CD8-positive, alpha-beta memory T cell (primary cell): ENCODE measurements at regions of chr3 and their contacts with region 1.

Region 1: DNA sequence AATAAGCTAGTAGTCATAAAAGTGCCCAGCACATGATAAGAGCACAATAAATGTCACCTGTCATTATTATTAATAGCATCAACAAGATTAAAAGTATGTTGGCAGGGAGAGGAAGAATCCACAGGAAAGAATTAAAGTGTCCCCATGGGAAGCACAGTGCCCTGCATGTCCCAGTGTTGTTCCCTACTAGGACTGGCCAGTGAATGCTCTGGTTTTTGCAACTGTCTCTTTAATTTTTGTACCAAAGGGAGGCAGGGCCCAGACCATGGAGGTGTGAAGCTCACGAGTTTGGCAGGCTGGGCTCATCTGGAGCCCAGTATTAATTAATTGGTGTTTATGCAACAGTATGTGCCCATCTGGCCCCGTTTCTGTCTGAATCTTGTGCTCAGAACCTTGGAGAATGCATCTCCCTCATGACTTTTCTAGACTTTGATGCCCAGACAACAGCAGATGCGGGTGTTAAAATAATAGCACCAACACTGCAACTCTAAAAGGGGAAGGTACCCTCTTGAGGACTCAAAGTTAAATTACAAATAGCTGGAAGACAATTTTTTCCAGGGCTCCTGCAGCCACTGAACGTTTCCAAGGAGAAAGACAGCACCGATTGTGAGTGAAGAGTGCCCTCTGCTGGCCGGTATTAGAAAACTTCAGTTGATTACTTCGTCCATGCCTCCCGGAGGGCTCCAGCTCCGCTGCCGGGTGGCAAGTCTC is 71.9 kb upstream of the SPATA12 start:
- DNase-seq: peak; percentile 58 to 75 (median 63)
- H3K4me3 ChIP-seq: no peak overlapping the region
- H3K4me3 Mint-ChIP-seq: peak overlapping the region in 1 of 7 donors; percentile 40
- H3K27ac ChIP-seq: no peak overlapping the region
- H3K27ac Mint-ChIP-seq: peak overlapping the region in 2 of 8 donors; percentile 4
- H3K4me1 ChIP-seq: peaks cover 8% of the 10 kb centered on the region
- H3K4me1 Mint-ChIP-seq: peaks cover 9 to 24% (median 19%) of the 10 kb centered on the region in 3 donors
- H3K27me3 ChIP-seq: no peaks in the 10 kb centered on the region
- H3K27me3 Mint-ChIP-seq: peaks cover 8 to 22% of the 10 kb centered on the region in 2 donors

Region 2: DNA sequence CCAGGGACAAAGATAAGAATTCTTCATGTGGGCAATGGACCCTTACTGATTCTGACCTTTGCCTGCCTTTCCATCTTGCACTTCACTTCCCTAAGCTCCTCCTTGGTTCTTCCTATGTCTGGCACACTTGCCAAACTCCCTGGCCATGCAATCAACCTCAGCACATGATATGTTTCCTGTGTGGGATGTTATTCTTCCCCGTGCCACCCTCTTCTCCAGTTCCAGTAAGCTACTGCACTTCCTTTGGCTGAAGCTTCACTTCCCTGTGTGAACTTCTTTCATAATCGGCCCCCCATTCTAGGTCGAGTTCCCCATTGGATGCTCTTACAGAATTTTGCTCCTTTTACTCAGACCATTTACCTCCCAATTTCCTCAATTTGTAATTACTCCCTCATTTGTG is 294.9 kb before region 1 on chr3:
- CTCF ChIA-PET with region 1: interaction called, 23 read pairs
- POLR2A ChIA-PET with region 1: interaction called, 3 read pairs
- DNase-seq: no peak
- H3K4me3 ChIP-seq: peak overlapping the region; percentile 11
- H3K4me3 Mint-ChIP-seq: peak overlapping the region; percentile 85 to 94 (median 88)
- H3K27ac ChIP-seq: no peak overlapping the region
- H3K27ac Mint-ChIP-seq: peak overlapping the region; percentile 66 to 91 (median 82)
- H3K4me1 ChIP-seq: peaks cover 37% of the 10 kb centered on the region
- H3K4me1 Mint-ChIP-seq: peaks cover 44 to 52% (median 49%) of the 10 kb centered on the region in 3 donors
- H3K27me3 ChIP-seq: no peaks in the 10 kb centered on the region
- H3K27me3 Mint-ChIP-seq: no peaks in the 10 kb centered on the region

Region 3: DNA sequence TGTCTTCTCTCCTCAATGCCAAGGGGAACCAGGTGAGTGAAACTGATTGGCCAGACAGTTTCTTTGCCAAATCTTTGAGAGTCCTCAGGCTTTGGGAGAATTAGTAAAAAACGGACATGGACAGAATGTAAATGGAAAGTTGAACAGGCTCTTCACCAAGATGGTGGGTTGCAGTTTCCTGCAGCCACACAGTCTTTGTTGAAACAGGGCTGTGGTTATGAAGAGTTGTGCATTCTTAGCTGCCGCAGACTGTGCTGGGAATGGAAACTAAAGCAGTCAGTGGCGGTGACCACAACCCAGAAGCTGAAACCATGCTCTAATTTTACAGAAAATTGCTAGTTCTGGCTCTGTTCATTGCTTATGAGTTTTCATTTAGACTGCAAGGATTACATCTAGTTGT is 263.4 kb before region 1 on chr3:
- CTCF ChIA-PET with region 1: interaction called, 15 read pairs
- POLR2A ChIA-PET with region 1: no interaction called
- DNase-seq: peak; percentile 31 to 84 (median 64)
- H3K4me3 ChIP-seq: peak overlapping the region; percentile 26
- H3K4me3 Mint-ChIP-seq: peak overlapping the region; percentile 57 to 82 (median 76)
- H3K27ac ChIP-seq: no peak overlapping the region
- H3K27ac Mint-ChIP-seq: peak overlapping the region; percentile 77 to 96 (median 94)
- H3K4me1 ChIP-seq: peaks cover 32% of the 10 kb centered on the region
- H3K4me1 Mint-ChIP-seq: peaks cover 63 to 74% (median 67%) of the 10 kb centered on the region in 3 donors
- H3K27me3 ChIP-seq: no peaks in the 10 kb centered on the region
- H3K27me3 Mint-ChIP-seq: no peaks in the 10 kb centered on the region

Region 4: DNA sequence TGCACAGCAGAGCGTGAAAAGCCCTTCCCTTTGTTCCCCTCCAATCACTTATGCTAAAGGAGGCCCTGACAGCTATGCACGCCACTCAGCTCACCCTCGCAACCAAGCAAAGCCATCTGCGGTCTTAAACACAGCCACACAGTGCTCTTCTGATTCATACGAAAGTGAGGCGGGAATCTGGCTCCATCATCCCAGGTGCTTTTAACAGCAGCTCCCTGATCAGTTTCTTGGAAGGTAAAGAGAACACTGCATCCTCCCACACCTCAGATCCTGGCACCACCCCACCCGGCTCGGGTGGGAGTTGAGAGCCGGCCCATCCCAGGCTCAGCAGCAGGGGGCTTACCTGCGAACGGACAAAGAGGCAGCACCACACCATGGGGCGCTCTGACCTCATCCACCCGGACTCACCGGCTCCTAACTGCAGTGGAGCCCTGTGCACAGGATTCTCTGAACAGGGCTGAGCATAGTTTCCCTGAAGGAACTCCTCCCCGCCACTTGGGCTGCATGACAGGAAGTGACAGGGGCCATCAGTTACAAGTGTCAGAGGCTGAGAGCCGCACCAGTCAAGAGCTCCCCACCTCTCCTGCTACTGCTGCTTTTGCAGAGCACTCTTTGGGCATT is 72.5 kb before region 1 on chr3:
- CTCF ChIA-PET with region 1: interaction called, 21 read pairs
- POLR2A ChIA-PET with region 1: no interaction called
- DNase-seq: peak; percentile 59 to 83 (median 68)
- H3K4me3 ChIP-seq: peak overlapping the region; percentile 94
- H3K4me3 Mint-ChIP-seq: peak overlapping the region; percentile 90 to 95 (median 92)
- H3K27ac ChIP-seq: peak overlapping the region; percentile 83
- H3K27ac Mint-ChIP-seq: peak overlapping the region; percentile 90 to 99 (median 94)
- H3K4me1 ChIP-seq: peaks cover 71% of the 10 kb centered on the region
- H3K4me1 Mint-ChIP-seq: peaks cover 66 to 92% (median 84%) of the 10 kb centered on the region in 3 donors
- H3K27me3 ChIP-seq: no peaks in the 10 kb centered on the region
- H3K27me3 Mint-ChIP-seq: no peaks in the 10 kb centered on the region

Region 5: GRCh38 chr3:57179580-57180410 is 191.2 kb after region 1 on chr3:
- CTCF ChIA-PET with region 1: no interaction called
- POLR2A ChIA-PET with region 1: no interaction called
- DNase-seq: no peak
- H3K4me3 ChIP-seq: no peak overlapping the region
- H3K4me3 Mint-ChIP-seq: no peak overlapping the region
- H3K27ac ChIP-seq: no peak overlapping the region
- H3K27ac Mint-ChIP-seq: no peak overlapping the region
- H3K4me1 ChIP-seq: no peaks in the 10 kb centered on the region
- H3K4me1 Mint-ChIP-seq: no peaks in the 10 kb centered on the region
- H3K27me3 ChIP-seq: no peaks in the 10 kb centered on the region
- H3K27me3 Mint-ChIP-seq: peaks cover 10 to 46% of the 10 kb centered on the region in 2 donors